ENCODE measurements at regions of chr12 and their contacts with region 1.

Region 1: GRCh38 chr12:102080842-102081241 is 19.1 kb upstream of the WASHC3 start:
- DNase-seq: no peak
- ATAC-seq: no peak
- H3K4me3 ChIP-seq: no peak overlapping the region
- H3K27ac ChIP-seq: no peak overlapping the region
- H3K4me1 ChIP-seq: no peaks in the 10 kb centered on the region
- H3K27me3 ChIP-seq: no peaks in the 10 kb centered on the region
- CTCF ChIP-seq: no peak
- EP300 ChIP-seq: no peak
- POLR2A ChIP-seq: no peak
- RAD21 ChIP-seq: no peak

Region 2: GRCh38 chr12:102005256-102005655 is 75.6 kb before region 1 on chr12:
- CTCF ChIA-PET with region 1: no interaction called
- POLR2A ChIA-PET with region 1: no interaction called
- RAD21 ChIA-PET with region 1: no interaction called
- SMC1A ChIA-PET with region 1: no interaction called
- in situ Hi-C with region 1: no loop called
- intact Hi-C with region 1: no loop called
- DNase-seq: no peak
- ATAC-seq: no peak
- H3K4me3 ChIP-seq: no peak overlapping the region
- H3K27ac ChIP-seq: no peak overlapping the region
- H3K4me1 ChIP-seq: peaks cover 10% of the 10 kb centered on the region
- H3K27me3 ChIP-seq: no peaks in the 10 kb centered on the region
- CTCF ChIP-seq: no peak
- EP300 ChIP-seq: no peak
- POLR2A ChIP-seq: no peak
- RAD21 ChIP-seq: no peak

Region 3: DNA sequence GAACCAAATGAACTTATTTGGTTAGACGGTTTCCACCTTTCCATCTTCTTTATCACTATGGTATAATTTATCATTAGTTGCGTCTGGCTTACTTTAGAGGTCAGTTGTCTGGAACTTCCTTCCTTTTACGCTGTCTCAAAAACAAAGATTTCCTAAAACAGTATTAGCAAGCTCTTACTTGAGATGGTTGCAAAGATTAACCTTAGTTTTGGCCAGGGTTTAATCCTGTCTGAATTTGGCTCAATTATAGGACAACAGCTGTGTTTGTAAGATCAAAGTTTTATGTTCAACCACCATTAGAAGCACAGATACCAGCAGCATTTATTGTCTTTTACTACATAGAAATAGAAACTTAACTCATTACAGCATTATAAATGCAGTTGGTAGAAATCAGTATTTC is 11.1 kb before region 1 on chr12:
- CTCF ChIA-PET with region 1: interaction called, 3 read pairs
- POLR2A ChIA-PET with region 1: no interaction called
- RAD21 ChIA-PET with region 1: no interaction called
- SMC1A ChIA-PET with region 1: interaction called, 10 read pairs
- in situ Hi-C with region 1: no loop called
- intact Hi-C with region 1: no loop called
- DNase-seq: no peak
- ATAC-seq: no peak
- H3K4me3 ChIP-seq: no peak overlapping the region
- H3K27ac ChIP-seq: no peak overlapping the region
- H3K4me1 ChIP-seq: no peaks in the 10 kb centered on the region
- H3K27me3 ChIP-seq: no peaks in the 10 kb centered on the region
- CTCF ChIP-seq: no peak
- EP300 ChIP-seq: no peak
- POLR2A ChIP-seq: no peak
- RAD21 ChIP-seq: no peak

Region 4: GRCh38 chr12:102182635-102183034 is 101.8 kb after region 1 on chr12:
- CTCF ChIA-PET with region 1: no interaction called
- POLR2A ChIA-PET with region 1: no interaction called
- RAD21 ChIA-PET with region 1: no interaction called
- SMC1A ChIA-PET with region 1: no interaction called
- in situ Hi-C with region 1: no loop called
- intact Hi-C with region 1: no loop called
- DNase-seq: no peak
- ATAC-seq: no peak
- H3K4me3 ChIP-seq: no peak overlapping the region
- H3K27ac ChIP-seq: no peak overlapping the region
- H3K4me1 ChIP-seq: no peaks in the 10 kb centered on the region
- H3K27me3 ChIP-seq: no peaks in the 10 kb centered on the region
- CTCF ChIP-seq: no peak
- EP300 ChIP-seq: no peak
- POLR2A ChIP-seq: no peak
- RAD21 ChIP-seq: no peak

Measured in GM12878 (cell line).